ENCODE measurements at regions of chr5 and their contacts with region 1.

Region 1: DNA sequence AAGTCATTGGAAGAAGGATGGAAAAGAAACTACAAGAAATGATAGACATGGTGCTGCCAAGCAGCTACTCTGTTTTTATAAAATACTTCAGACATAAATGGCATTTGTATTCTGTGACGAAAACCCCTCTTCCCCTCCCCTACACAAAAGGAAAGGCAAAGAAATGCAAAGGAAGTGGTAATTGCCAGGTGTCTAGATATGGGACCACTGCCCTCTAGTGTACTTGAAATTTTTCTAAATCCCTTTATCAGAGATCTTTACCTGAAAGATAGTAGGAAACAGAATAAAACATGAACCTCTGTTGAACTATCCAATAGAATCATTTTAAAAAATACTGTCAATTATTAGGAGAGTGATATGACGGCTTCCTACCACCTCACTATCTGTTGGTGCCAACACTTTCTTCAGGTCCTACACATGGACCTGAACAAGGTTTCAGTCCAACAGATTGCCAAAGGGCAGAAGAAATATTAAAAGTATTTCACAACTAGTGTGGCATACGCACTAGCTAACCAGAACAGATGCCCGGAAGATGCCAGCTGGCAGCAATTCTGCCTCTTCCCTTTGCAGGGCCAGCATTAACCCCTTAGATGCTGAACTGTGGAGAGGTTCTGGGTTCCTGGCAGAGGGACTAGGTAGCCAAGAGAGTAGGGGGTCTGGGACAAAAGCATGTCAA is 104.1 kb downstream of the TSSK1B start:
- DNase-seq: peak in 10 of 35 experiments; percentile 4 to 77 (median 16)
- ATAC-seq: peak; percentile 78 to 88 (median 87)
- H3K4me3 ChIP-seq: no peak overlapping the region
- H3K4me3 Mint-ChIP-seq: no peak overlapping the region
- H3K27ac ChIP-seq: no peak overlapping the region
- H3K27ac Mint-ChIP-seq: peak overlapping the region in 1 of 2 donors; percentile 19
- H3K4me1 ChIP-seq: peaks cover 4% of the 10 kb centered on the region in 2 experiments
- H3K4me1 Mint-ChIP-seq: peaks cover 16 to 19% (median 18%) of the 10 kb centered on the region in 3 donors
- H3K27me3 ChIP-seq: no peaks in the 10 kb centered on the region
- H3K27me3 Mint-ChIP-seq: no peaks in the 10 kb centered on the region

Region 2: GRCh38 chr5:113043491-113043931 is 287.2 kb before region 1 on chr5:
- CTCF ChIA-PET with region 1: no interaction called
- POLR2A ChIA-PET with region 1: no interaction called
- DNase-seq: peak in 8 of 35 experiments; percentile 7 to 37 (median 13)
- ATAC-seq: peak in 1 of 4 experiments; percentile 35
- H3K4me3 ChIP-seq: no peak overlapping the region
- H3K4me3 Mint-ChIP-seq: no peak overlapping the region
- H3K27ac ChIP-seq: no peak overlapping the region
- H3K27ac Mint-ChIP-seq: no peak overlapping the region
- H3K4me1 ChIP-seq: peaks cover 0 to 8% of the 10 kb centered on the region in 2 experiments
- H3K4me1 Mint-ChIP-seq: peaks cover 4 to 5% (median 5%) of the 10 kb centered on the region in 3 donors
- H3K27me3 ChIP-seq: peaks cover 0 to 3% of the 10 kb centered on the region in 2 experiments
- H3K27me3 Mint-ChIP-seq: no peaks in the 10 kb centered on the region

Region 3: GRCh38 chr5:113259034-113259433 is 71.6 kb before region 1 on chr5:
- CTCF ChIA-PET with region 1: no interaction called
- POLR2A ChIA-PET with region 1: no interaction called
- DNase-seq: no peak
- ATAC-seq: no peak
- H3K4me3 ChIP-seq: no peak overlapping the region
- H3K4me3 Mint-ChIP-seq: no peak overlapping the region
- H3K27ac ChIP-seq: no peak overlapping the region
- H3K27ac Mint-ChIP-seq: no peak overlapping the region
- H3K4me1 ChIP-seq: no peaks in the 10 kb centered on the region
- H3K4me1 Mint-ChIP-seq: no peaks in the 10 kb centered on the region
- H3K27me3 ChIP-seq: peaks cover 0 to 2% of the 10 kb centered on the region in 2 experiments
- H3K27me3 Mint-ChIP-seq: peaks cover 4 to 15% of the 10 kb centered on the region in 2 donors

Region 4: DNA sequence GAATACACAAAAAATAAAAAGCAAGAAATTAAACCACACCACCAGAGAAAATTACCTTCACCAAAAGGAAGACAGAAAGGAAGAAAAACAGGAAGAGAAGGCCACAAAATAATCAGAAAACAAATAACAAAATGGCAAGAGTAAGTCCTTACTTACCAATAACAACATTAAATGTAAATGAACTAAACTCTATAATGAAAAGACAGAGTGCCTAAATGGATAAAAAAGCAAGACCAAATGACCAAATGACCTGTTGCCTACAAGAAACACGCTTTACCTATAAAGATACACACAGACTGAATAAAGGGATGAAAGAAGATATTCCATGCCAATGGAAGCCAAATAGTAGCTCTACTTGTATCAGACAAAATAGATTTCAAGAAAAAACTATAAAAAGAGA is 16.9 kb after region 1 on chr5:
- CTCF ChIA-PET with region 1: interaction called in 1 of 2 experiments, 13 read pairs
- POLR2A ChIA-PET with region 1: no interaction called
- DNase-seq: no peak
- ATAC-seq: no peak
- H3K4me3 ChIP-seq: no peak overlapping the region
- H3K4me3 Mint-ChIP-seq: no peak overlapping the region
- H3K27ac ChIP-seq: no peak overlapping the region
- H3K27ac Mint-ChIP-seq: no peak overlapping the region
- H3K4me1 ChIP-seq: no peaks in the 10 kb centered on the region
- H3K4me1 Mint-ChIP-seq: no peaks in the 10 kb centered on the region
- H3K27me3 ChIP-seq: peaks cover 0 to 13% of the 10 kb centered on the region in 2 experiments
- H3K27me3 Mint-ChIP-seq: peaks cover 16 to 21% of the 10 kb centered on the region in 2 donors